AG04450 (cell line): ENCODE measurements at regions of chr3 and their contacts with region 1.

Region 1: DNA sequence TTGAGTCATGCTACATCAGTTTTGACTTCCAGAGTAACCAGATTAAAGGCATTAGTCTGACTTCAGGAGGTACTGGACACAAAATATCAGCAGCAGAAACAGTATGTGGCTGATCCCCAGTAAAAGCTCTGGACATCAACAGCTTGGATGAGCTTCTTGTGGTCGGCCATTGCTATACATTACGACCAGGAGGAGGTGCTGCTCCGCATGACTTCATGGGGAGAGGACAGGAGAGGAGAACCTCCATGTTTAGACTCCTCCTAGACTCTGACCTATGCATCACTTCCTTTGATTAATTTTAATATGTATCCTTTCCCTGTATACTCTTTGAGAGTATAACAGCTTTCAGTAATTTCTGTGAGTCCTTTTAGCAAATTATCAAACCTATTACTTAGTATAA is 285.6 kb upstream of the ARHGEF26 start:
- DNase-seq: no peak
- H3K4me3 ChIP-seq: no peak overlapping the region
- H3K27ac ChIP-seq: no peak overlapping the region
- H3K27me3 ChIP-seq: no peaks in the 10 kb centered on the region
- CTCF ChIP-seq: no peak

Region 2: DNA sequence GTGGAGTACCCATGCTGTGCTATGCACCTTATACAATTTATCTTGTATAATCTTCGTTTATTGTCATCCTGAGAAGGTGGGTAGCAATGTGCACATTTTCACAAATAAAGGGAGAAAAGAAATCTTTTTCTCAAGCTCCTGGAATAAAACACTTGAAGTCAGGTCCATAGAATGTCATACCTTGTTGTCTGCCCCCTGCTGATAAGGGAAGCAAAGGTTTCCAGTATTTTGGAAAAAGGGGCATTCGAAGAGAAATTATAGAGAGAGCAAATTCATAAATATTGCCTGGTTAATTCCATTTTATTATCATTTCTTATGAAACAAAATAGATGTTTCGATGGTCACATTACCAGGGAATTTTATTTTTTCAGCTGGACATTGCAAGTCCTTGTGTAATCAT is 395.8 kb before region 1 on chr3:
- CTCF ChIA-PET with region 1: no interaction called
- POLR2A ChIA-PET with region 1: interaction called, 13 read pairs
- DNase-seq: no peak
- H3K4me3 ChIP-seq: no peak overlapping the region
- H3K27ac ChIP-seq: no peak overlapping the region
- H3K27me3 ChIP-seq: no peaks in the 10 kb centered on the region
- CTCF ChIP-seq: peak; percentile 48